Colonic mucosa (tissue), 4 donors: ENCODE measurements at regions of chr10 and their contacts with region 1.

Region 1: GRCh38 chr10:114470956-114471905 is 66.9 kb upstream of the AFAP1L2 start:
- DNase-seq: peak; percentile 71
- H3K4me3 ChIP-seq: no peak overlapping the region
- H3K27ac ChIP-seq: peak overlapping the region; percentile 16
- H3K4me1 ChIP-seq: no peaks in the 10 kb centered on the region
- H3K27me3 ChIP-seq: no peaks in the 10 kb centered on the region
- CTCF ChIP-seq: peak; percentile 87

Region 2: DNA sequence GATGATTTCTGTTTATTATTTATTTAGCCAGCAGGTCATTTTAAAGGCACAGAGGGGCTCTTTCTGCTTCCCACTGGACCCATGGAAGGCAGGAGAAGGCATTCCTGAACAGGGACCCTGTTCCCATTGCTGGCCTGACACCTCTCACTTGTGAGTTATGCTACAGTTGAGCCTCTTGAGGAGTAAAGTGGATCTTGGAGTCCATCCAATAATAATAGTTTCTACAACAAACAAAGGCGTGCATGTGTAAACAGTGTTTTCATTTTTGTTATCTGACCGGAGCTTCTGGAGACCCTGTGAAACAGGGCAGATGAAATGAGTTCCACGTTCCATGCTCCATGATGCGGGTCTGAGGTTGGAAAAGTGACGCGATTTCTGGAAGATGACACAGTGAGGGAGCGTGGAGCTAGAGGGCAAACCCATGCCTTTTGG is 1045.7 kb before region 1 on chr10:
- intact Hi-C with region 1: no loop called
- DNase-seq: no peak
- H3K4me3 ChIP-seq: no peak overlapping the region
- H3K27ac ChIP-seq: no peak overlapping the region
- H3K4me1 ChIP-seq: peaks cover 6% of the 10 kb centered on the region
- H3K27me3 ChIP-seq: no peaks in the 10 kb centered on the region
- CTCF ChIP-seq: no peak

Region 3: GRCh38 chr10:114703377-114704107 is 232.3 kb after region 1 on chr10:
- intact Hi-C with region 1: loop called (anchors 10 kb)
- DNase-seq: no peak
- H3K4me3 ChIP-seq: no peak overlapping the region
- H3K27ac ChIP-seq: no peak overlapping the region
- H3K4me1 ChIP-seq: no peaks in the 10 kb centered on the region
- H3K27me3 ChIP-seq: no peaks in the 10 kb centered on the region
- CTCF ChIP-seq: peak; percentile 36

Region 4: DNA sequence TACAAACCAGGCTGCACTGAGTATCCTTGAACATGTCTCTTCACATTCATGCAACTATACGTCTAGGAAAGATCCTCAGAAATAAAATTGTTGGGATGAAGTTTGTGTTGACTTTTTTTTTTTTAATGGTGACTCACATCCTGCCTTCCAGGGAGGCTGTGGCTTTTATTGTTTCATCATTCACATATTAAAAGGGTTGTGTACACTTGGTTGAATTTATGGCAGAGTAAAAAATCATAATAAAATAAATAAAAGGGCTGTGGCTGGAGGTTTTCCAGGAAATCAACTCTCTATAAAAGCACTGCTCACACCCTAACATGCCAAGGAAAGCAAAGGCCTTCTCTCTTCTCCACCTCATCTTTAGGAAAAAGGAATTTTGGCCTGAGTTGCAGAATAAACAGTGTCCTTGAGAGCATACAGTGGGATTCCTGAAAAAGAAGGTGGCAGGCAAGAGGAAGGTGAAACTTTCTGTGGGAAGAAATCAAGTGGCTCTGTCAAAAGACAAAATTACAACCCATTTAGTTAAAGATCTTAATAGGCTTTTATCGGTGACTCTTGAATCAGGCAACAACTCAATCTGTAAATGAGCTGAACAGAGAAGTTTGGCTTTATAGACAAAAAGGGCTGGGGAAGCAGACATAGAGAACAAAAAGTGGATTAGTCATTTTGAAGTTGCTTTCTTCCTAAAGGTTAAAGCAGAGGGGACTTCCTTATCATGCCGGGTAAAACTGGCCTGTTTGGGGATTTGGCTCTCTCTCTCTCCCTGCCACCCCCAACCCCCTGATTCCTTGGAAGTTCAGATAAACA is 308.8 kb after region 1 on chr10:
- intact Hi-C with region 1: loop called (anchors 10 kb)
- DNase-seq: peak; percentile 39
- H3K4me3 ChIP-seq: no peak overlapping the region
- H3K27ac ChIP-seq: peak overlapping the region; percentile 56
- H3K4me1 ChIP-seq: peaks cover 8% of the 10 kb centered on the region
- H3K27me3 ChIP-seq: no peaks in the 10 kb centered on the region
- CTCF ChIP-seq: no peak